ENCODE measurements at regions of chr12 and their contacts with region 1.

Region 1: GRCh38 chr12:11092128-11092527 is at the start of gene TAS2R43:
- DNase-seq: no peak

Region 2: GRCh38 chr12:11039171-11039570 is 53.0 kb before region 1 on chr12:
- intact Hi-C with region 1: loop called (anchors 5 kb)
- DNase-seq: no peak